Left colon (tissue), 2 donors: ENCODE measurements at regions of chr15 and their contacts with region 1.

Region 1: DNA sequence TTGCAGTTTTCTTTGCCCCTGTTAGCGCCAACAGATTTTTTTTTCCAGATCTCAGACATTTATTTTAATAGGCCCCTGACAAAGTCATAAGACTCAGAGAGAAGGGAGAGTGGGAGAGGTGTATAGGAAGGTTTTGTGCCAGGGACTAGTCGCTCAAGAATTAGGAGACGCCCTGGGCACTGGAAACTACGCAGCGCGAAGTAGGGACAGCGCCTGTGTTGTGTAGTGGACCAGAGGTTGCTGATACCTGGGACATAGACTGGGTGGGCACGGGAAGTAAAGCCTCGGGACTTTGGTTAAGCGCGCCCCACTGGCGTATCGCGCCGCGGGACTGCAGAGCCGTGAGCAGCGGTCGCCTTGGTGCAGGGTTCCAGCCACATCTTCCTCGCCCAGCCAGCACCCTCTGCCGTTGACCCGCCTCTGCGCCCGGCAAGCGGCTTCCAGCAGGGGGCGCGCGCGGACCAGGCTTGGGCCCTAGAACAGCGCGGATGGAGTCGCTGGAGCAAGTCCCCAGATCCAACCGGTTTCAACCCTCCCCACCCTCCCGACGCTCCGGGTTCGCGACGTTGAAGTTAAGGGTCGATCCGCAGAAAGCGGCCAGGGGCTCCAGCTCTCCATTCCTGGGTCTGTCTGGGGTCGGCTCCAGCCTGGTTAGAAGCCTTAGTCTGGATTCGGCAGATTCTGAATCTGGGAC is 3.0 kb upstream of the ISLR2 start:
- DNase-seq: peak; percentile 68 to 91
- ATAC-seq: peak; percentile 97

Region 2: DNA sequence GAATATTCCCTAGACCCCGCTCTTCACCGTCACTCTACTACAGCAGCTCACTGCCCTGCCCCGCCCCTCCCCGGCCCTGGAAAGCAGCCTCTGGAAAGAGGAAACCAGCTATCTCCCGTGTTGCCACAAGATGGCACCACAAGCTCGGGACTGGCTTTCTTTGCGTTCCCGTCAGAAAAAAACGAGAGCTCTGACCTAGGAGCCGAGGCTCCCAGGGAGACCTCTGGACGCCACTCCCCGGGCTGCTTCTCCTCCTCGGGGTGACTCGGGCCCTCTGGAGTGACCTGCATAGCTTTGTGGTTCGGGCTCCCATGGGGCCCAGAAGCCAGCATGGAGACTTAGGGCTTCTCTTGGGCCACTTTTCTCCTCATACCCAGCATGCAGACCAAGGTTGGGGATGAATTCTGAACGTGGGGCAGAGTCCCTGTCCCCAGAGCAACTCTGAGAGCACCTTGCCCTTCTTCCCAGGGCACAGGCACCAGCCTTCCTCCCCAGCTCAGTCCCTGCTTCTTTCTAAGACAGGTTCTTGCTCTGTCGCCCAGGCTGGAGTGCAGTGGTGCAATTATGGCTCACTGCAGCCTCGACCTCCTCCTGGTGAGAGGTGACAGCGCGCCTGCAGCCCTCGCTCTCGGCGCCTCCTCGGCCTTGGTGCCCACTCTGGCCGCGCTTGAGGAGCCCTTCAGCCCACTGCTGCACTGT is 154.3 kb before region 1 on chr15:
- intact Hi-C with region 1: loop called in 1 of 2 experiments (anchors 5 kb)
- DNase-seq: peak; percentile 74 to 89
- ATAC-seq: peak; percentile 97

Region 3: DNA sequence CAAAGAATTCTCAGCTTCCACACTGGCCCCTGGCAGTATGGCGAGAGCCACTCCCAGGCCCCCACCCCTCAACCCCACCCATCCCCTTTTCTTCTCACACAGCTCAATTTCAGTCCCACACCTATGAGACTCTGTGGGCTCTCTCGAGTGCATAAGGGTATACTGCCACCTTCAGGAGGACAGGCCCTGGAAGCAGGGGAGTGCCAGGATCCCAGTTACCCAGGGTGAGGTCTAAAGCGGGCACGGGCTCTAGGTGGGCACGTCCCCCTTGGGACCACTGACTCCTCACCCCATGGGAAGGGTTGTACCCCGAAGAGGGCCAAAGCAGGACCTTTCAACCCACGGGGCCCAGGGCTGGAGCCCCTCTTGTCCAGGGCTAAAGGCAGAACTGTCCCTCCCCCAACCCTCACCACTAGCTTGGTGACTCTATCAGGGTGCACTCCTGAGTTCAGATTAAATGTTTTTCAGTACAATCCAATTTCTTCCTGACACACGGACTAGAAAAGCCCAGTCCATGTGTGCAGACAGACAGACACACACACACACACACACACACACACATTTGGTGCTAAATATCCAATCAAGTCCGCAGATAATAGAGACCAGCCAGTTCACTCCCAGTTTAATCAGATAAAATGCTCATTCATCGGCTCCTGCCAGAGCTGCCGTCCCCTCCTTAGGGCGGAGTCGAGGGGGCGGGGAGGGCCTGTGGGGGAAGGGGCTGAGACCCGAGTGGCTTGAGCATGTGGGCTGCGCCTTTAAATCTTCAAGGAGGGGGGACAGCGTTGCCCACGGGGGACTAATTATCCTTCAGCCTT is 180.6 kb after region 1 on chr15:
- intact Hi-C with region 1: loop called in 1 of 2 experiments (anchors 5 kb)
- DNase-seq: peak in 1 of 2 donors; percentile 47
- ATAC-seq: peak; percentile 80

Region 4: GRCh38 chr15:74322181-74323076 is 195.0 kb after region 1 on chr15:
- intact Hi-C with region 1: loop called in 1 of 2 experiments (anchors 5 kb)
- DNase-seq: peak; percentile 34 to 54
- ATAC-seq: peak; percentile 75